ENCODE measurements at regions of chr14 and their contacts with region 1.

Region 1: DNA sequence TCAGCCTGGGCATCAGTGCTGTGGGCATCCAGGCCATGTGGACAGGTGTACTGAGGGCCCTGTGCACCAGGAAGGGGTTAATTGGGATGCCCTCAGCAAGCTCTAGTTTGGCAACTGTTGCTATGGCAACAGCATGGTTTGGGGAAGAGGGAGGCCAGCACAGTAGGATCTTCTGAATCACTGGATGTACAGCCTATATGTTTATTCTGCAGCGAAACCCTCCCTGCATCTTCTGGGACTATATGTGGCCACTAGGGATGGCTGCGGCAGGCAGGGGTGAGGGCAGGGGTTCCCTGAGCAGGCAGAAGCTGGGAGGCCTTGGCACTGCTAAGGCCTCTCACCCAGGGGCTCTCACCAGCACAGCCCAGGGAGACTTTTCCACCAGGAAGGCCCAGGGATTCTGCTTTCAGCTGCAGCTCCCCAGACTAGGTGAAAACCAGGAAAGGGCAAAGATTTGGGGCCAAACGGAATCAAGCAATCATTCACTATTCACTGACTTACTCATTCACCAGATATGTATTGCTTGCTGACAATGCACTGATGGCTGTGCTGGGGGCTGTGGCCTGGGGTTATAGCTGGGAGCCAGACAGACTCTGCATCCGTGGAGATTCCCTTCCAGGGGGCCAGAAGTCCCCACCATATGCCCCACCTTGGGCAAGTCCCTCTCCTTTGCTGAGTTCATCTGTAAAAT is 42.8 kb downstream of the IRF2BPL start:
- DNase-seq: peak; percentile 28 to 46
- ATAC-seq: peak; percentile 68 to 79
- H3K4me3 ChIP-seq: no peak overlapping the region
- H3K27ac ChIP-seq: peak overlapping the region; percentile 43 to 78; a peak in 5 of 6 replicates
- H3K4me1 ChIP-seq: peaks cover 19% of the 10 kb centered on the region
- CTCF ChIP-seq: no peak
- EP300 ChIP-seq: no peak
- POLR2A ChIP-seq: no peak
- RAD21 ChIP-seq: no peak

Region 2: DNA sequence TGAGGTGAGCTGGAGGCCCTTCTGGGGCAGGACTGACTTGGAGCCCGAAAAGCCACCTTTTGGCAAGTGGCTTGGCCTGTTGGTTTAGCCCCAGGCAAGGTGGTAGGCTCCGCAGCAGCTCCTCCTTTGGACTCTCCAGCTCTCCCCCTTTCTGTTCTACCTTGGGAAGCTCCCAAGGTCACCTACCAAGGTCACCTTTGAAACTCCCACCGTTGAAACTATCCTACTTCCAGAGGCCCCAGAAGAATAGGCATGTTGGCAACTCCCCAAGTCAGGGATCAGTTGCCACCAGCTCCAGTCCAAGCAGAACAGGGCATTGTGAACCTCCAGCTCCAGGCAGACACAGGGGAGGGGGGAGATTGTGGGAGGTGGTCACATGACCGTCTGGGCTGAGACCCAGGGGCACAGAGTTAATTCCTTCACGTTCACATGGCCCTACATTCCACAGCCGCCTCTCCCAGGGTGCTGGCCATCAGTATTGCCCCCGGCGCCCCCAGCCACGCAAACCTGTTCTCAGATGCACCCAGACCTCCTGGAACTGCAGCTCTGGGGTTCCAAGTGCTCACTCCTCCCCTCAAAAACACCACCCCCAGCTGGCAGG is 28.4 kb after region 1 on chr14:
- CTCF ChIA-PET with region 1: interaction called, 11 read pairs
- POLR2A ChIA-PET with region 1: no interaction called
- DNase-seq: no peak
- ATAC-seq: no peak
- H3K4me3 ChIP-seq: no peak overlapping the region
- H3K27ac ChIP-seq: peak overlapping the region in 1 of 2 experiments; percentile 49; a peak in 2 of 6 replicates
- H3K4me1 ChIP-seq: no peaks in the 10 kb centered on the region
- CTCF ChIP-seq: no peak
- EP300 ChIP-seq: no peak
- POLR2A ChIP-seq: no peak
- RAD21 ChIP-seq: no peak

Region 3: DNA sequence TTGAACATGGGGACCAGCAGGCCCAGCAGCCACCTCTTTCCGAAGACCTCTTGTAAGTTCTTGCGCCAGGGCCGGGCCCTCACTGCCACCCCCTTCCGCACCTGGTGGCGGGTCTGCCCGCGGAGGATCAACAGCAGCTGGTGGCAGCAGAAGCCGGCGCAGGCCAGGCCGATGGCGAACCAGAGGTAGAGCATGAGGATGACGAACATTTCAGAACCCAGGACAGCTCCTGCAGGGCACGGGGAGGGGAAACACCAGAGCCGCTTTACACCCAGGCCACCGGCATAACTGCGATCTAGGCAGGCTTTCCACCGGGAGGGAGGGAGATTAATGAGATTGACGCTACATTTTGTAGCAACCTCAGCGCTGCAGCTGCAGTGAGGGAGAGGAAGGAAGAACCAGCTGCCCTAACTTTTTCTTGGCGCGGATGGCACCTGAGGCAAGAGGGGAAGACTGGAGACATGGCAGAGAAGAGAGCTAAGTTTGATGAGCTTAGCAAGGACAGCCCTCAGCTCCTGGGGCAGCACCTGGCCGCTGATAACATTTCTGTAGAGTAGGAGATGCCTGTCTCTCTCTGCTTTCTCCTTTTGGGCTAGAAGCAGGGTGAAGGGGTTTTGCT is 148.1 kb after region 1 on chr14:
- CTCF ChIA-PET with region 1: no interaction called
- POLR2A ChIA-PET with region 1: no interaction called
- DNase-seq: peak; percentile 49 to 65
- ATAC-seq: peak; percentile 55 to 78; a peak in 5 of 6 replicates
- H3K4me3 ChIP-seq: no peak overlapping the region
- H3K27ac ChIP-seq: no peak overlapping the region
- H3K4me1 ChIP-seq: no peaks in the 10 kb centered on the region
- CTCF ChIP-seq: no peak
- EP300 ChIP-seq: no peak
- POLR2A ChIP-seq: no peak
- RAD21 ChIP-seq: no peak

Region 4: DNA sequence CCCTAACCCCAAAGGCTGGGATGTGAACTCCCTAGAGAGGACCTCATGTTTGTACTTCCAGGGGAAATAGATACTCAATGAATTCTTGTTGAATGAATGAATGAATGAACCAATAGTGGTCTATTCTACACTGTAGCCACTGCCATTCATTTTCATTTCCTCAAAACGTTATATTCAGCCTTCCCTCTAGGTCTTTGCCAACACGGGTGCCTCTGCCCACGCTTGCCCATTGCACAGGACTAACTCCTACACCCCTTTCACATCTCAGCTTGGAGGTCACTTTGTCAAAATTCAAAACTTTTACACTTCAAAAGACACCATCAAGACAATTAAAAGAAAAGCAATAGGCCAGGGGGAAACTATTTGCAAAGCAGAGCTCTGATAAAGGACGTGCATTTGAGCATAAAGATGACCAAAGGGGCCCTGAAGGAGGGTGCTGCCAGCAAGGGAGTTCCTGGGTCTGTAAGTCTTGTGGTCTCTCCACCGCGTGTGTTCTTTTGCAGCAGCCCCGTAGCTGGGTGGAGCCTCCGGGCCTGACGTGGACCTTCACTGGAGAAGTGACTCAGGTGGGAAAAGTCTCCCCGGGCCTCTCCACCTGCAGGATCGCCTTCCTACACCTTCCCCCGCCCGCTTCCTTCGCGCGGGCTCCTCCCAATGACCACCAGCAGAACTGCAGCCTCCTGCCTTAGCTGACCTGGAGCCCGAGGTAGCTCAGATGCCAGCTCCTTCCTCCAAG is 227.4 kb after region 1 on chr14:
- CTCF ChIA-PET with region 1: no interaction called
- POLR2A ChIA-PET with region 1: no interaction called
- DNase-seq: peak; percentile 45 to 72
- ATAC-seq: peak; percentile 88 to 96
- H3K4me3 ChIP-seq: no peak overlapping the region
- H3K27ac ChIP-seq: no peak overlapping the region
- H3K4me1 ChIP-seq: no peaks in the 10 kb centered on the region
- CTCF ChIP-seq: peak; percentile 47
- EP300 ChIP-seq: no peak
- POLR2A ChIP-seq: no peak
- RAD21 ChIP-seq: peak; percentile 58 to 68